RWPE1 (cell line): ENCODE measurements at regions of chr16 and their contacts with region 1.

Region 1: DNA sequence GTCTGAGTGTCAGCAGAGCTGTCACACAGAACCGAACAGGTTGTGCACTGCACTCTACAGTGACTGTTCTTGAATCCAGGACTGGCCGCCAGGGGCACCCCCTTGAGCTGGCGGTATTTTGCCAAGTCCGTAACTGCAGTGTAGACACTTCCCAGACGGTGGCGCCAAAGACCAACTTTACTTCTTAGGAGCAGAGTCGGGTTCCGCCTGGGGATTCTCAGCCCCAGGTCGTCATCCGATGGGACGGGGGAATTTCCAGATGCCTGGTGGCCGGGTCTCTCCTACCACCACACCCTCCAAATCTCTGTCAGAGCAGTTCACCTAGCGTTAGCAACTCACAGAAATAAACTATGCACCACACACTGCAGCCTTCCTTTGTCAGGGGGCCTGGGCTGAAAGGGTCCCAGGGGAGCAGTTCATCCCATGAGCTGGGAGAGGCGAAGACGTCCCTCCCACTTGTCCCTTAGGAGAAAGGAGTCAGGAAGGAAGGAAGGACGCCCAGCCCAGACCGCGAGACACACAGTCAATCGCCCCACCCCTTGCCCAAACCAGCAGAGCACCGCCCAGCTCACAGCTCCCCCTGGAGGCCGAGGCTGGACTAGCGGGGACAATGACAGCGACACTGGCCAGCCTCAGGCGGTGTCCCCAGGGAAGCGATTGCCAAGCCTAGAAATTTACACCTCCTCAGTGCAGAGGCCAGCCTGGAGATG is 7.4 kb upstream of the RIPOR1 start:
- DNase-seq: peak; percentile 95
- H3K27ac ChIP-seq: peak overlapping the region; percentile 90
- CTCF ChIP-seq: peak; percentile 93

Region 2: GRCh38 chr16:67393035-67393787 is 128.0 kb before region 1 on chr16 and contains the start of gene TPPP3:
- CTCF ChIA-PET with region 1: no interaction called
- POLR2A ChIA-PET with region 1: no interaction called
- DNase-seq: peak; percentile 44
- H3K27ac ChIP-seq: no peak within 1 kb of the TSS
- CTCF ChIP-seq: peak; percentile 46

Region 3: DNA sequence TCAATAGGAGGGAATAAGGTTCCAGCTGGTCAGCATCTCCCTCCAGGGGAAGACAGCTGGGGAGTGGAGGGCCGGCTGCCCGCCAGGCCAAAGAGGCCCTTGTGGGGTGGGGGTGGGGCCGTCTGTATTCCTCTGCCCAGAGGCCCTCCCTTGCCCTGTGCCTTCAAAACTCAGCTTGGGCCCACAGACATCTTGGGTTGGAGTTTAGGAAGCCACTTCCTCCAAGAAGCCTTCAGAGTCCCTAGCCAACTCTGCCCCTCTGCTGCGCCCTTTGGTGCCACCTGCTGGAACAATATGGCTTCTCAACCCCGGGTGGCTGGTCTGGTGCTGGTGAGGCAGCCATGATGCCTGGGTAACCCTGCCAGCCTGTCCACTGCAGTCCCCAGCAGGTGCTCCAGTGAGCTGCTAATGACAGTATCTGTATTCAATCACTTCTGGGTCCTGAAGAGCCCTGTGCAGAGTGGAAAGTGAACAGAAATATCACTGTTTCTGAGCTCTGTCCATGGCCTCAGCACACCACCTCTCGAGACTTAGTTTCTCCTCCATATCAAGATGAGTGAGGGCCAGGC is 73.7 kb before region 1 on chr16:
- CTCF ChIA-PET with region 1: no interaction called
- POLR2A ChIA-PET with region 1: no interaction called
- DNase-seq: peak; percentile 32
- H3K27ac ChIP-seq: no peak overlapping the region
- CTCF ChIP-seq: peak; percentile 49; the same call in 1 of the 2 replicates

Region 4: GRCh38 chr16:67506468-67506867 is 14.8 kb before region 1 on chr16:
- CTCF ChIA-PET with region 1: interaction called, 12 read pairs
- POLR2A ChIA-PET with region 1: no interaction called
- DNase-seq: no peak
- H3K27ac ChIP-seq: no peak overlapping the region
- CTCF ChIP-seq: no peak

Region 5: DNA sequence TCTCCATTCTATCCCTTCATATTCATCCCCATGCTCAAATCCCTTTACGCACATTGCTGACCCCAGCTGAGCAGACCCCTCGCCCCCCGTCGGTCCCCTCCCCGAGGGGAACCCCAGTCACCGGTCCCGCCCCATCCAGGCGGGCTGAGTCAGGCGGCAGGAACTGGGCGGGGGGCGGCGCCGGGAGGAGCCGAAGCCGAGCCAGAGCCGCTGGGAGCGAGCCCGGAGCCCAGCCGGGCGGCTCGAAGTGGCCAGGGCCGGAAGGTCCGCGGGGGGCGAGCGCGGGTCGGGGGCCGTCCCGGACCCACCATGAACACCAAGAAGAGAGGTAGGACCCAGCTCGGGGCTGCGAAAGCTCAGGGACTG is 16.0 kb after region 1 on chr16:
- CTCF ChIA-PET with region 1: interaction called, 10 read pairs
- POLR2A ChIA-PET with region 1: no interaction called
- DNase-seq: peak; percentile 64
- H3K27ac ChIP-seq: peak overlapping the region; percentile 61
- CTCF ChIP-seq: no peak

Region 6: DNA sequence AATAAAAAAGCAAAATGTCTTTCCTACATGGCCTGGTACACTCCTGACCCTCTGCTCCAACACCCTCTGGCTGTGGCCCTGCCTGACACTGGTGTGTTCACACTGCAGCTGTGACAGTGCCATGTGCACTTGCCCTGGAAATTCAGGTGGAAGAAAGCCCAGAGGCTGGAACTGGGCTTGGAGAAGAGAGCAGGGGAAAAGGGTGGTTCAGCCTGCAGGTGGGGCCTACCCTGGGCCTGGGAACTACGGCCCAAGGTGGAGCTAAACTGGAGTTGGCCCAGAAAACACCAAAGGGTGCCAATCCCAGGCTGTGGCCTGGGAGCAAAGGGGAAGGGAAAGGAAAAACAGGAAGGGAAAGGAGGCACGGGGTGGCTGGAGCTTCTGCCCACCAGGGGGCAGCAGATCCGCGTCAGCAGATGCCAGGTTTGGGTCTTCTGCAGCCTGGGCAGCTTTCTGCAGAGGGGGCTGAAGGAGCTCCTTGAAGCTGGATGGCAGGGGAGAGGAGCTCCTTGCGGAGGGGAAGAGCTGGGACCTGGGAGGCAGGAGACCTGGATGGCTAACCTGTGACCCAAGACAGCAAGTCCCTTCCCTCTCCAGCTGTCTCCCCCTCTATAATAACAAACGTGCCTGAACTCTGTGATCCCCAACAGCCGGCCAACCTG is 25.6 kb after region 1 on chr16:
- CTCF ChIA-PET with region 1: interaction called, 17 read pairs
- POLR2A ChIA-PET with region 1: no interaction called
- DNase-seq: peak; percentile 77
- H3K27ac ChIP-seq: peak overlapping the region; percentile 79
- CTCF ChIP-seq: peak; percentile 96

Region 7: DNA sequence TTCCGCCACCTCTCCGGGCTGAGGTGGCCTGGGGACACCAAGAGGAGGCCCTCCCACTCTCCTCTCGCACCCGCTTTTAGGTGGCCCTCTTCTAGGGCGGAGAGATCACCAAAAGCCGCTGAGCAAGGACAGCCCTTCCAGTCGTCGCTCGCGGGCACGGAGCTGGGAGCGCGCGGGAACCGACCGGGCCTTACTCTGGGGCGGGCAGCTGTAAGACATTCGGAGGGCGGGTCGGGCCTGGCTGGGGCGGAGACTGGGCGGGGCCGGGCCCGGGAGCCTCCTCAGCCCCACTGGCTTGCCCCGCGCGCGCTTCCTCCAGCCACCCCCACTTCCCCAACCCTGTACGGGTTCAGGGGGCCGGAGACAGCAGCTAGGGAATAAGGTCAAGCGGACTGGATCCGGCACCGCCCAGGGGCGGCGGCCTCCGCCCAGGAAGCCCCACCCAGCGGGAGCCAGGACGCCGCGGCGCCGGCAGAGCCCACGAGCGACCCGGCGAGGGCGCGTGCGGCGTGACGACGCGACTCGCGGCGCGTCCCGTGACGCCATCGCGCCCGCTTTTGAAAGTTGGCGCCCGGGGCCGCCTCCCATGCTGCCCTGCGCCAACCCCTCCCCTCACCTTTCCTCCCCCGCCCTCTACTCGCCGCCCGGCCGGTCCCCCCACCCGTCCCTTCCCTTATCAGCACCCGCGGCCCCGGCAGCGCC is 40.7 kb after region 1 on chr16:
- CTCF ChIA-PET with region 1: interaction called, 15 read pairs
- POLR2A ChIA-PET with region 1: interaction called, 7 read pairs
- DNase-seq: peak; percentile 96
- H3K27ac ChIP-seq: peak overlapping the region; percentile 99
- CTCF ChIP-seq: no peak

Region 8: GRCh38 chr16:67667817-67668494 is 146.7 kb after region 1 on chr16:
- CTCF ChIA-PET with region 1: interaction called, 14 read pairs
- POLR2A ChIA-PET with region 1: no interaction called
- DNase-seq: peak; percentile 90
- H3K27ac ChIP-seq: peak overlapping the region; percentile 80
- CTCF ChIP-seq: peak; percentile 71